ENCODE measurements at regions of chr6 and their contacts with region 1.

Region 1: DNA sequence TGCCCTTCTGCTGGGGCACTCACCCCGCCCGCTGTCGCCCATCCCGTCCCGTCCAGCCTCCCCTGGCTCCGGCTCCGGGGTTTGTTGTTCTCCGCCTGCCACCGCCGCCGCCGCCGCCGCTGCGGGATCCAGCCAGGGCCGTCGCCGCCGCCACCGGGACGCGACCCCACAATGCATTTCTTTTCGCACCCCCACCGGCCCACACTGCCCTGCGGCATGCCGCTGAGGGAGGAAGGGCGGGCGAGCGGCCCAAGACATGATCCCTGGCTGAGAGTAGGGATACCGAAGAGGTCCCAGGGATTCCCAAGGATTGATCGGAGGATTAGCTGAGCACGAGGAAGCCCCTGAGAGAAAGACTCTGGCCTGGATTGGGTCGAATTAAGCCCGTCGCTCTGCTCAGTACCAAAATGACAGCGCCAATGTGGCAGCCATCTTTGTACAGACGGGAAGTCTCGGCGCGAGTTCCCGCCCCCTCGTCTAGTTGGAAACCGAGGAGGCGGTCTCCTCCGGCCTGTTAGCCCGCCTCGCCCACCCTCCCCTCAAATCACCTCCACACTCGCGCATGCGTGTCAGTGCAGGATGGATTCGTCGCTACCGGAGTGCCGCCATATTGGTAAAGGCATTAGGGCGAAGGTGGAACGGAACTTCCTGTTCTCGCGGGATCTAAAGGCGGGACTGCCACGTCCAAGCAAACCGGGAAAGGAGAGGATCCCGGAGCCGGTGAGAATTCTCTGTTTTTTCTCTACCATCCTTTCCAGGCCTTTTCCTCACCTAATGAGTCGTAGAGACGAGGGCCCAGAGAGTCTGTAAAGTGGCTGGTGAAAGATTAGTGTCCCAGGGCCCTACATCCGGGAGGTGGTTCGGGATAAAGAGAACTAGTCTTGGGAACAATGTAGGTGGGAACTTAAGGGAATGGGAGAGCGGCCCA is at the starts of genes RXRB and SLC39A7:
- DNase-seq: peak; percentile 100
- ATAC-seq: peak; percentile 82 to 86 (median 84)
- H3K4me3 ChIP-seq: peak within 1 kb of the TSS; percentile 81
- H3K27ac ChIP-seq: peak within 1 kb of the TSS; percentile 92
- H3K4me1 ChIP-seq: peaks cover 32% of the 10 kb centered on the region
- H3K27me3 ChIP-seq: no peaks in the 10 kb centered on the region
- CTCF ChIP-seq: no peak
- total RNA-seq, gene RXRB: 31.3 to 43.7 (median 36.0) TPM
- total RNA-seq, gene SLC39A7: 17.6 to 41.4 (median 28.4) TPM

Region 2: DNA sequence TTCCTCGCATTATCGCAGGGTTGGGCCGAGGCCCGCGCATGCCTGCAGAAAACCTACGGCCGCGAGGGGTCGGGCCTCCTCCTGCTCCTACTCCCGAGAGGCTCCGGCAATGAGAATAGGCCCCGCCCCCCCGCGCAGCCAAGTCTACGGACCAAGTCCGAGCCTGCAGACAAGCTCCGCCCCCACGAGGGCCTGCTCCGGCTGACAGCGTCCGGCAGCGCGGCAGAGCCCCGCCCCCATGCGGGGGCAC is 1004.9 kb before region 1 on chr6:
- intact Hi-C with region 1: loop called in 1 of 2 experiments (anchors 10 kb)
- DNase-seq: peak; percentile 100
- ATAC-seq: peak; percentile 88 to 93 (median 92)
- H3K4me3 ChIP-seq: peak overlapping the region; percentile 88
- H3K27ac ChIP-seq: peak overlapping the region; percentile 99
- H3K4me1 ChIP-seq: peaks cover 24% of the 10 kb centered on the region
- H3K27me3 ChIP-seq: no peaks in the 10 kb centered on the region
- CTCF ChIP-seq: peak; percentile 48

Region 3: DNA sequence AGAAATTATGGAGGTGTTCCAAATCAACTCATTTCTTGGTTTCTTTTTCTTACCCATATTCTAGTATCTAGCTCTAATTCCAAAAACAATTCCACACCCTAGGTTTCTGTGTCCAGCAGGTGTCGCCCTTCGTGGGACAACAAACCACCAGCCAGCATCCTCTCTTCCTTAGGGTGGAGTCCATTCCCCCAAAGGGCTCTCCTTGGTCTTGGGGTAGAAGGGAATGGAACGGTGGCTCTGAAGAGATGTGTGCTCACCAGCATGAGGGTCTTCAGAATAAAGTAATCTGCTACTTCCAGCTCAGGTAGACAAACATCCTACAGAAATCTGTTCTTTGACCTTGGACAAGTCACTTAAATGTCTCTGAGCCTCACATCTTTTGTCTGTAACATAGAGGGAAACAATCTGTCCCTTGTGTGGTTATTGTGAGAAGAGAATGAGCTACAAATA is 266.8 kb before region 1 on chr6:
- intact Hi-C with region 1: no loop called
- DNase-seq: peak; percentile 77 to 85
- ATAC-seq: peak; percentile 72 to 89 (median 80)
- H3K4me3 ChIP-seq: no peak overlapping the region
- H3K27ac ChIP-seq: no peak overlapping the region
- H3K4me1 ChIP-seq: no peaks in the 10 kb centered on the region
- H3K27me3 ChIP-seq: no peaks in the 10 kb centered on the region
- CTCF ChIP-seq: peak; percentile 88

Region 4: GRCh38 chr6:32971581-32972352 is 228.7 kb before region 1 on chr6:
- intact Hi-C with region 1: loop called in 1 of 2 experiments (anchors 5 kb)
- DNase-seq: peak; percentile 99 to 100
- ATAC-seq: peak; percentile 54 to 65 (median 60)
- H3K4me3 ChIP-seq: peak overlapping the region; percentile 79
- H3K27ac ChIP-seq: peak overlapping the region; percentile 100
- H3K4me1 ChIP-seq: peaks cover 25% of the 10 kb centered on the region
- H3K27me3 ChIP-seq: no peaks in the 10 kb centered on the region
- CTCF ChIP-seq: no peak

Region 5: GRCh38 chr6:33161354-33162331 is 38.8 kb before region 1 on chr6:
- intact Hi-C with region 1: loop called (anchors 1 kb)
- DNase-seq: peak; percentile 84 to 90
- ATAC-seq: peak; percentile 92 to 100 (median 94)
- H3K4me3 ChIP-seq: peak overlapping the region; percentile 70
- H3K27ac ChIP-seq: no peak overlapping the region
- H3K4me1 ChIP-seq: peaks cover 5% of the 10 kb centered on the region
- H3K27me3 ChIP-seq: no peaks in the 10 kb centered on the region
- CTCF ChIP-seq: peak; percentile 91

Region 6: DNA sequence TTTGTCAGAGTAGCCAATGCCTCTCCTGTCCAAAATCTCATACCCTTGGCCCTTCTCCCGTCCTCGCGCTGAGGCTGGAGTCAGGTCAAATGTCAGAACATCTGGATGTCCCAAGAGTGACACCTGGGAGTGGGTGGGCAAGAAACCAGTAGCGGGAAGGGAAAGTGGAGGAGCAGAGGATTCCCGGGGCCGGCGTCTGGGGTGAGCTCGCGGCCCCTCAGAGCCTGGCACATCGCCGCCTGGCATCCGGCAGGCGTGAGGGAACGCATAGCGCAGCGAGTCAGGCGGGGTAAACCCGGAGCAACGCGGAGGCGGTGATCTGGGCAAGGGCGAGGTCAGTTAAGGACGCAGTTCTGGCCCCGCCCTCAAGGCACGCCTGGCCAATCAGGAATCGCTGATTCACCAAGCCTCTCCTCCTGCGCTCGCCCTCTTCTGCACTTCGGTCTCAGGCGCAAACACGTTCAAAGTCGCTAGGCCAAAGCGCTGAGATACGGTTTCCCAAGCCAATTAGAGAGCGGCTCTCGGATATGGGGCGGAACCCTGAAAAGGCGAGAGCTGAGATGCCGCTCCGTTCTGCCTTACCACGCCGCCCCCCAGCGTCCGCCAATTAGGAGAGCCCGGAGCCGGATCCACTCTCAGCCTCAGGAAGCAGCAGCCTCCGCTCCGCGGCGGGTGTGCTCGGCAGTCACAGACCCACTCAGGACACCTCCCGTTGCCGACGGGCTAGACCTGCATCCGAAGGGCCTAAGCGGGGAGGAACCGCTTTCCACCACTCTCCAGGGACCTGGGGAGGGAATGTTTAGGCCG is 48.6 kb after region 1 on chr6:
- intact Hi-C with region 1: loop called in 1 of 2 experiments (anchors 5 kb)
- DNase-seq: peak; percentile 96 to 98
- ATAC-seq: peak; percentile 95 to 97 (median 96)
- H3K4me3 ChIP-seq: peak overlapping the region; percentile 74
- H3K27ac ChIP-seq: peak overlapping the region; percentile 85
- H3K4me1 ChIP-seq: peaks cover 13% of the 10 kb centered on the region
- H3K27me3 ChIP-seq: no peaks in the 10 kb centered on the region
- CTCF ChIP-seq: no peak

Region 7: DNA sequence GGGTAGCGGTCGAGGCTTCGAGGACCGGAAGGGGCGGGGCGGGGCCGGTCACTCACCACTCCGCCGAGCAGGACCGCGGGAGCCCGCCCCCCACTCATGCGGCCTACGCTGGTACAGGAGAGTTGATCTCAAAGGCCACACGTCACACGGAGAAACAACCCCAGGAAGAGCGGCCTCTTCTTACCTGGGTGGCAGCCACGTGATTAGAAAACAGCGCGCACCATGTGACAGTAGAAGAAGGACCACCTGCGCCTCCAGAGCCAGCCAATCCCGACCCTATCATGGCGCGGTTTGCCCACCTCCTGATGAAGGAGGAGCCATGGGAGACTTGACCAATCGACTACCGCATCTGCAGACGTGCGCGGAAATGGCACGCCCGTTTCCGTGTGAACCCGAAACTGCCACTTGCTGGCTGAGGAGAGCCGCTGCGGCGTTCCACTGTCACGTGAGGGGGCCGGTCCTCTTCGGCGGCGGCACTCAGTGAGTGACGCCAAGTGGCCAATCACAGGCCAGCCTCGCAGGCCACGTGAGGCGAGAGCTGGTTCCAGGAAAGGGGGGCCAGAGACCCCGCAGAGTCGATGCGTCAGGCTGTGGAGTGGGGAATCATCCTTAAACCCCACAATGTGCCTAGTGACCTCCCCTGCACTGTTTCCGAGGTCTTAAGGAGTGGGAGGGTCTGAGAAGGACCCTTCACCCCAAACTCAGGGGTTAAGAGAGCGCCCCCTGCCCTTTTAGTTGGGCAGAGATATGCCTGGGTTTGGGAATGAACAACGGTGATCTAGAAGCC is 217.6 kb after region 1 on chr6 and contains the start of gene CUTA:
- intact Hi-C with region 1: loop called in 1 of 2 experiments (anchors 10 kb)
- DNase-seq: peak; percentile 99 to 100
- ATAC-seq: peak; percentile 96
- H3K4me3 ChIP-seq: peak within 1 kb of the TSS; percentile 73
- H3K27ac ChIP-seq: peak within 1 kb of the TSS; percentile 97
- H3K4me1 ChIP-seq: peaks cover 18% of the 10 kb centered on the region
- H3K27me3 ChIP-seq: no peaks in the 10 kb centered on the region
- CTCF ChIP-seq: peak; percentile 25
- total RNA-seq, gene CUTA: 75.4 to 121 (median 95.6) TPM